ENCODE measurements at regions of chr7 and their contacts with region 1.

Region 1: GRCh38 chr7:50467817-50468610 is 17.9 kb upstream of the FIGNL1 start:
- DNase-seq: peak; percentile 89
- H3K4me3 Mint-ChIP-seq: no peak overlapping the region
- H3K27ac Mint-ChIP-seq: no peak overlapping the region
- H3K4me1 Mint-ChIP-seq: peaks cover 12% of the 10 kb centered on the region
- H3K27me3 Mint-ChIP-seq: peaks cover 2% of the 10 kb centered on the region

Region 2: DNA sequence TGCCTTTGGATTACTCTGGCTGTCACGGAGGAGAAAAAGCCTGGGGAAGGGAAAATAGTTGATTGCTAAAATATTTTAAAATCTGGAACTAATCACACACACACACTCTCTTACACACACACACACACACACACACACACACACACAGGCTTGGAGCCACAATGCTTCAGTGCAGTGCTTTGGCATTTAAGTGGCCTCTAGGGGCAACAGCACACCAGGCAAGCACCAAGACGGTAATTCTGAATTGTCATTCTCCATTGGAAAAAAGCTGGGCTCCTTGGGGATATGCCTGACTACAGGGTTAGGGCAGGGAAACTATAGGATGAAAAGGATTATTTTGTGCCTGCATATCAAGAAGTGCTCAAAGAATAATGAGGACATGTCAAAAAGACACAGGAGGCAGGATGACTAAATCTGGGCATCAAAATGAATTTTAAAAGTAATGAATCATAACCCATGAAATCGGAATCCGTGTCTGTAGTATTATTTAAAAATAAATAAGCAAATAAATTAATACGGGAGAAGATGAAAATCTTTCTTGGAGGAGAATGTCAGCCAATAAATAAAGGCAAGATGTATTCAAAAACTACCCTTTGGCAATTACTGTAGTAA is 127.6 kb after region 1 on chr7:
- CTCF ChIA-PET with region 1: interaction called, 10 read pairs
- POLR2A ChIA-PET with region 1: no interaction called
- intact Hi-C with region 1: no loop called
- DNase-seq: peak; percentile 24
- H3K4me3 Mint-ChIP-seq: no peak overlapping the region
- H3K27ac Mint-ChIP-seq: no peak overlapping the region
- H3K4me1 Mint-ChIP-seq: peaks cover 21% of the 10 kb centered on the region
- H3K27me3 Mint-ChIP-seq: peaks cover 6% of the 10 kb centered on the region

Region 3: DNA sequence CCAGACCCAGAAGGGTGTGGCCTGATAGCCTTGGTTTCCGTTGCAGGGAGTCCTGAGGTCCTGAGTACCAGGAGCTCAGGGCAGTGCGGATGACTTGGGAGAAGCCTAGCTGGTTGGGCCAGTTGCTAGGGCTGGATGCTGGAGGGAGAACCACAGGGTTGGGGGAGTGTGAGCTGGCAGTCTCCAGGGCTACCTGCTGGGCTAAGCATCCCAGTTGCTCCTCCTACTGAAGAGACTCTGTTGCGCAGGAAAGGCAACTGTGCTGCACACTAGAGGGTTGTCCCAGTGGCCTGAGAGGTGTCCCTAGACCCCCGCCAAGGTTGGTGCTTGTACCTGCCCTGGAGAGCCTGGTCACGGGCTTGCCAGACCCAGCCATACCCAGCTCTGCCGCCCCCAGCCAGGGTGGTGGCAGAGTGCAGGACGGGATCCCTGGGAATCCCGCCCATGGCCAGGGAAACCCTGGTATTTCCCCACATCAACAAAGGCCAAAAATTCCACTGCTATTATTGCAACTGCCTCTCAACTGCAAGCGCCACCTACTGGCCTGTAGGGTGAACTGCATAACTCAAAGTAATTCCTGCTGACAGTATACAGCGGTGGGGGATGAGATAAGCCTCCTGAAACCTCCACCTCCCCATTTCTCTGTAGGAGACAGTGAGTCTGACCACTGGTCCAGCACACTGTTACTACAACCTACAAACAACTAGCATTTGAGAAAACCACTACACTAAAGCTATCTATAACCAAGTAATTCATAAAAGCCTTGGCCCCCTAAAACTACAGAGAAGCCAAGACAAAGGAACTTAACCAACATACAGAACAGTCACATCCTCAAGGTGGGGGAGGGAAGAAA is 164.8 kb after region 1 on chr7:
- CTCF ChIA-PET with region 1: interaction called, 68 read pairs
- POLR2A ChIA-PET with region 1: no interaction called
- intact Hi-C with region 1: loop called (anchors 1 kb)
- DNase-seq: peak; percentile 65
- H3K4me3 Mint-ChIP-seq: no peak overlapping the region
- H3K27ac Mint-ChIP-seq: no peak overlapping the region
- H3K4me1 Mint-ChIP-seq: peaks cover 7% of the 10 kb centered on the region
- H3K27me3 Mint-ChIP-seq: peaks cover 2% of the 10 kb centered on the region

Region 4: DNA sequence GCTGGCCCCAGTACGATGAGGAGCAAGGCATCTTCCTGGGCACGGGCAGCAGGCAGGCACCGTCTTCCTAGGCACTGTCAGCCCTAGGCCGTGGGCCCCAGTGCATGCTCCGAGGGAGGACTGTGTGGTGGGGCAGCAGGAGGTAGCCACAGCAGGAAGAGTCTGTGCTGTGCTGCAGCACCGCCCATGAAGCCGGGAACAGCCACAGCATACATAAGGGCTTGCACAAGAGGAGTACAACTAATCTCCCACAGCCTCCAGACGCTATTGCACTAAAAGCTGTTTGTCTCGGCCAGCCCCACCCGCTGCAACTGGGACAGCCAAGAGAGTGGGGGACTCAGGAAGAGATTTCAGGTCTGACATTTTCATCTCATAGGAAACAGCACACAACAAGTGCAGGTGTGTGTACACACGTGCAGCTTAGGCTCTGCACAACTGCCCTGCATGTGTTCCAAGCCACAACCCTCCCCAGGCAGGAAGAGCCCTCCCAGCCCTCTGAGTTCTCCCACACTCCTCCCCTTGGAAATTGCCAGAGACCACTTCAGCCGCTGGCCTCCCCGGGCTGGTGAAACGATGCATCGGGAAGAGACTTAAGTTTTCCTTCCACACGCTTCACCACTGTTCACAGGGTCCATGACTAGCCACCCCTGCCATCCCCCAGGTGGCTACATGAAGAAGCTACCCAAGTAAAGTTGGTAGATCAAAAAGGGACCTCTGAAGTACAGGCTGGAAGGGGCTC is 185.3 kb after region 1 on chr7:
- CTCF ChIA-PET with region 1: interaction called, 10 read pairs
- POLR2A ChIA-PET with region 1: no interaction called
- intact Hi-C with region 1: no loop called
- DNase-seq: no peak
- H3K4me3 Mint-ChIP-seq: no peak overlapping the region
- H3K27ac Mint-ChIP-seq: no peak overlapping the region
- H3K4me1 Mint-ChIP-seq: peaks cover 3% of the 10 kb centered on the region
- H3K27me3 Mint-ChIP-seq: no peaks in the 10 kb centered on the region

Region 5: DNA sequence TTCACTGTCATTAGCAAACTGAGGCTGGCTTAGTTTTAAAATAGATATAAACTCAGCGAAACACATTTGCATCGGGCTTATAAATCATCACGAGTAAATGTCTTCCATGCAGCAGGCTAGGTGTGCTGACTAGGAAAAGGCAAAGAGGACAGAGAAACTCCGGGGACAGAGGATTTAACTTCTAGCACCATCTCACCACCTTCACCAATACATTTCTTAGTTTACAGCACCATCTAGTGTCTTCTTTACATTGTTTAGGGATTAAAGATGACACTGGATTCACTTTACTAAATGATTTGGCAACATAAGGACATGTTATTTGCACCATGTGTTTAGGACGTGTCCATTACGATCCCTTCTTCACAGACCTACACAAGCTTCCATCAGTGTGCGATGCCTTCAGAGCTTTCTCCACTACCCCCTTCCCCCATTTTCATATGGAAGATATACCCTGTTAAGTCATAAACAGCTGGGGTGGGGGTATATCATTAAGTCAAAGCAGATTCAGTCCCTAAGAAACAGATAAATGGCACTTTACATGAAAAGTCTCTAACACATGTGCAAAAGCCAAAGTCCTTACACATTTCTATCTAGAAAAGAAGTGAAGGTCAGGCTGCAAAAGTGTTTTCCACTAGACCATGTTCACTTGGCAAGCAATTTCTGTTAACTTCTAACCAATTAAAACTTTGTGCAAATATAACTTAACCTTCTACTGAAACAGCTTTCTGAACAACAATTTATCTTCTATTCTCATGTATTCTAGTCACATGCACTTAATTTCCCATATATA is 211.4 kb after region 1 on chr7:
- CTCF ChIA-PET with region 1: interaction called, 130 read pairs
- POLR2A ChIA-PET with region 1: no interaction called
- intact Hi-C with region 1: loop called (anchors 1 kb)
- DNase-seq: no peak
- H3K4me3 Mint-ChIP-seq: no peak overlapping the region
- H3K27ac Mint-ChIP-seq: no peak overlapping the region
- H3K4me1 Mint-ChIP-seq: no peaks in the 10 kb centered on the region
- H3K27me3 Mint-ChIP-seq: no peaks in the 10 kb centered on the region

Region 6: DNA sequence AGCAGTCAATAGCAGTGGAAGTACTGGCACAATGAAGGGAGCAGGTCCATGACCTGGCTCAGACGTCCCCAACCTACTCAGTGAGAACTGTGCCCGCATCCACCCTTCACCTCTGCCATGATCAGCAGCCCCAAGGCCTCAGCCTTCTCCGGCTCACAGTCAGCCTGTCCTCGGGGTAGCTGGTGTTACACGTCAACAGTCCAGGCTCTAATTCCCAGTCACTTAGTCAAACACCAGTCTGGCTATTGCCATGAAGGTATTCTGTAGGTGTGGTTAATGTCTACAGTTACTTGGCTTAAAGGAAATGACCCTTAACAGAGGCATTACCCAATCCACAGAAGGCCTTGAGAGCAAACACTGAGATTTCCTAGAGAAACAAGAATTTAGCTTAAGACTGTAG is 265.5 kb after region 1 on chr7:
- CTCF ChIA-PET with region 1: no interaction called
- POLR2A ChIA-PET with region 1: no interaction called
- intact Hi-C with region 1: no loop called
- DNase-seq: no peak
- H3K4me3 Mint-ChIP-seq: no peak overlapping the region
- H3K27ac Mint-ChIP-seq: no peak overlapping the region
- H3K4me1 Mint-ChIP-seq: peaks cover 3% of the 10 kb centered on the region
- H3K27me3 Mint-ChIP-seq: no peaks in the 10 kb centered on the region

Region 7: DNA sequence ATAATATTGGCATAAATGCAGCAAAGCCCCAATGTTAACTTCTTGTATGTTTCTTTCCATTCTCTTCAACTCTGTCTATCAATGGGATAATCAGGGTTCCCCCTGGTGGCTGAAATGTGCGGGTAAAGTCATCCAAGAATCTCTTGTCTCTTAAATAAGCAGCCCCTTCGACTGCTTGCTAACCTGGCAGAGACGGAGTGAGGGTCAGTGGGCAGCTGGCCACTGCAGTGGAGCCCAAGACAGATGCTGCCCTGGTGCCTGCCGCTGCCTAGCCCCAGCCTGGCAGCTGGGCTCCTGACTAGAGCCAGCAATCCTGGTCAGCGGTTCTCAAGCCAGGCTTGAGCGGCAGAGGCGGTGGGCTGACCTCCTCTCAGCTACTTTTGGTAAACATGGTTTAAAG is 599.7 kb after region 1 on chr7:
- CTCF ChIA-PET with region 1: interaction called, 9 read pairs
- POLR2A ChIA-PET with region 1: no interaction called
- intact Hi-C with region 1: loop called (anchors 5 kb)
- DNase-seq: peak; percentile 54
- H3K4me3 Mint-ChIP-seq: no peak overlapping the region
- H3K27ac Mint-ChIP-seq: no peak overlapping the region
- H3K4me1 Mint-ChIP-seq: no peaks in the 10 kb centered on the region
- H3K27me3 Mint-ChIP-seq: no peaks in the 10 kb centered on the region